IMR-90 (cell line): ENCODE measurements at regions of chr22 and their contacts with region 1.

Region 1: DNA sequence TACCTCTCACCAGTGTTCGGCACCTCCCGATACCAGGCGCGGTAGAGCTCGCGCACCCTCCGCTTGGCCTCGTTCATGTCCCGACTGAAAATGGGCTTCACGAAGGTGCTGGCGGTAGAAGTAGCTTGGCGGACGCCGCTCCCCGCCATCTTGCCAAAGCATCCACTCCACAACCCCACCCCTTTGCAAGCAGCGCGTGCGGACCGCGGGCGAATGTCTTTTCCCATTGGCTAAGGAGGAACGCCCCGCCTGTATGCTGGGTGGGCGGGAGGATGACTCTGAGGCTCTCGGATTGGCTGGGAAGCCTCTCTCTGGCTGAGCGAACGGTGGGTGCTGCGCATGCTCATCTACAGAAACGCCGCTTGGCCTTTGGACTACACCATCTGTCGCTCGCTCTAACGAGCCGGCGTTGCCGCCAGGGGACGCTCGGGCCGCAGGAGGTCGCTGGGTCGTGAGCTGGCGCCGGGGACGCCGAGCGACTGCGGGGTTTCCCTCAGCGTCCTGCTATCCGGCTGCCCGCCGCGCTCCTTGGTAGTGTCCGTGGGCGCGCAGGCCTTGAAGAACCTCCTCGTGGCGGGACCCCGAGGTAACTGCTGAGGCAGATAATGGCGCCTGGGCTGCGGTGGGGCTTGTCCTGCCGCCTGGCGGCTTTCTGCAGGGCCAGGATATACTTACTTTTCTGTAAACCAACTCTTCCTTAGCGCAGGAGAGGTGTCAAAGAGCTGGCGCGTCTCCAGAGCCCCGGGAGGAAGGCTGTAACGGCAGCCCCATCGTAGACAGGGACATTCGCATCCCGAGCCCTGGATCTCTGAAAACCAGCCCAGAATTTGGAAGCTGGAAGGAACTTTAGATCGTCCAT is at the start of gene NDUFA6:
- DNase-seq: peak; percentile 99
- ATAC-seq: peak; percentile 98
- H3K4me3 ChIP-seq: peak within 1 kb of the TSS; percentile 64
- H3K27ac ChIP-seq: peak within 1 kb of the TSS; percentile 82
- H3K4me1 ChIP-seq: peaks cover 2% of the 10 kb centered on the region; the same call in 1 of the 2 replicates
- H3K27me3 ChIP-seq: no peaks in the 10 kb centered on the region
- CTCF ChIP-seq: peak; percentile 94
- POLR2A ChIP-seq: peak; percentile 96
- RAD21 ChIP-seq: peak; percentile 82
- total RNA-seq, gene NDUFA6: 48.8 and 92.2 TPM in 2 replicates

Region 2: DNA sequence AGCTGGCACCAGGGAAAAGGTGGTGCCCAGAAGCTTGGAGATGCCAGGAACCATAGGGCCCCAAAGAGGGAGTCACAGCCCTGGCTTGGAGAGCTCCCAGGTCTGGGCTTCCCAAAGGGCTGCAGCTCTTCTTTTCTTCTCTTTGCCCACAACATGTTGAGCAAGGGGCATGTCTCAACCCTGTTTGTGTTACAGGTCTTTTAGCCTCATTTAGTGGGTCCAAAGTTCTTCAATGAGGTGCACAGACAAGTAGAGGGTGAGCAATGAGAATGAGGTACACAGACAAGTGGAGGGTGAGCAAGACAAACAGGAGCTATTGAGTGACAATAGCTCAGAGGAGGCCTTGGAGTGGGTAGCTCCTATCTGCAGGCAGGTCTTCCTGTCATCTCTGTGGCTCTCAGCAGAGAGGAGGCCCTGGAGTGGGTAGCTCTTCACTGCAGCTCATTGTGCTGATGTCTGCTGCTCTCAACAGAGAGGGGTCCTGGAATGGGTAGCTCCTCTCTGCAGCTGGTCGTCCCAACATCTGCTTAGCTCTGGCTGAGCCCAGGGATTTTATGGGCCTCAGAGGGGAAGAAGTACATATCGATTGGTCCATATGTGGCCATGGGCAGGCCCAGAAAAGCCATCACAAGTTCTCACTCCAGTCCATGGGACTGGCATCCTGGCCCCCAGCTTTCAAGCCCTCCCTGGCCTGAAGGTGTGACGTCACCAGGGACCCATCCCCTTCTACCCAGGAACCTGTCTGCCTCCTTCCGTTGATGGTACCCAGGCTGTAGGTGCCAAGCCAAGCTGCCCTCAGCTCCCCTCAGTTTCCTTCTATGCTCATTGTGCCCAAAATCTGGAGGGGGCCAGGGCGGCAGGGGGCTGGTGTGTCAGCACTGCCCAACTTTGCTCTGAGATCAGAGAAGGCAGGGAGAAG is 57.3 kb before region 1 on chr22:
- CTCF ChIA-PET with region 1: no interaction called
- POLR2A ChIA-PET with region 1: no interaction called
- dilution Hi-C with region 1: no loop called
- in situ Hi-C with region 1: no loop called
- intact Hi-C with region 1: no loop called
- DNase-seq: no peak
- ATAC-seq: no peak
- H3K4me3 ChIP-seq: no peak overlapping the region
- H3K27ac ChIP-seq: no peak overlapping the region
- H3K4me1 ChIP-seq: peaks cover 3% of the 10 kb centered on the region
- H3K27me3 ChIP-seq: no peaks in the 10 kb centered on the region
- CTCF ChIP-seq: no peak
- POLR2A ChIP-seq: no peak
- RAD21 ChIP-seq: no peak

Region 3: DNA sequence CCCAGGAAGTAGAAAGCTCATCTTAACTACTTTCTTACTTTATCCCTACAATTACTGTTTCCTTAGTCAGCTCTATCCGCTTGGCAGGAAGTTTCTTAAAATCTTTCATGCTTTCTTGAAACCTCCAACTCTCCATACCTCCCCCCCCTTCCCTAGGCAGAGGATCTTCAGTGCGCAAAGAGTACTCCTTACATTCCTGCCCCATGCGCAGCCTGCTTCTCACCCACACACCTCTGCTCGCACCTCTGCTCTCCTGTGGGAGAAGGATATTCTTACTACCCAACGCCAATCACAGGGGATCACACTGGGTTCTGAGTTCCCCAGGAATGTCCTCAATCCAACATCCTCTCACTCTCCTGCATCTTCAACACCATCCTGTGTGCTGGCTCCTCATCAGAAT is 167.3 kb after region 1 on chr22:
- CTCF ChIA-PET with region 1: no interaction called
- POLR2A ChIA-PET with region 1: no interaction called
- dilution Hi-C with region 1: no loop called
- in situ Hi-C with region 1: no loop called
- intact Hi-C with region 1: loop called (anchors 10 kb)
- DNase-seq: no peak
- ATAC-seq: no peak
- H3K4me3 ChIP-seq: no peak overlapping the region
- H3K27ac ChIP-seq: no peak overlapping the region
- H3K4me1 ChIP-seq: peaks cover 13% of the 10 kb centered on the region
- H3K27me3 ChIP-seq: no peaks in the 10 kb centered on the region
- CTCF ChIP-seq: no peak
- POLR2A ChIP-seq: no peak
- RAD21 ChIP-seq: no peak

Region 4: GRCh38 chr22:42313804-42314581 is 223.2 kb after region 1 on chr22:
- CTCF ChIA-PET with region 1: no interaction called
- POLR2A ChIA-PET with region 1: no interaction called
- dilution Hi-C with region 1: no loop called
- in situ Hi-C with region 1: no loop called
- intact Hi-C with region 1: loop called (anchors 5 kb)
- DNase-seq: peak; percentile 54
- ATAC-seq: peak; percentile 84
- H3K4me3 ChIP-seq: no peak overlapping the region
- H3K27ac ChIP-seq: no peak overlapping the region
- H3K4me1 ChIP-seq: no peaks in the 10 kb centered on the region
- H3K27me3 ChIP-seq: peaks cover 24% of the 10 kb centered on the region
- CTCF ChIP-seq: peak; percentile 46
- POLR2A ChIP-seq: no peak
- RAD21 ChIP-seq: peak; percentile 58

Region 5: DNA sequence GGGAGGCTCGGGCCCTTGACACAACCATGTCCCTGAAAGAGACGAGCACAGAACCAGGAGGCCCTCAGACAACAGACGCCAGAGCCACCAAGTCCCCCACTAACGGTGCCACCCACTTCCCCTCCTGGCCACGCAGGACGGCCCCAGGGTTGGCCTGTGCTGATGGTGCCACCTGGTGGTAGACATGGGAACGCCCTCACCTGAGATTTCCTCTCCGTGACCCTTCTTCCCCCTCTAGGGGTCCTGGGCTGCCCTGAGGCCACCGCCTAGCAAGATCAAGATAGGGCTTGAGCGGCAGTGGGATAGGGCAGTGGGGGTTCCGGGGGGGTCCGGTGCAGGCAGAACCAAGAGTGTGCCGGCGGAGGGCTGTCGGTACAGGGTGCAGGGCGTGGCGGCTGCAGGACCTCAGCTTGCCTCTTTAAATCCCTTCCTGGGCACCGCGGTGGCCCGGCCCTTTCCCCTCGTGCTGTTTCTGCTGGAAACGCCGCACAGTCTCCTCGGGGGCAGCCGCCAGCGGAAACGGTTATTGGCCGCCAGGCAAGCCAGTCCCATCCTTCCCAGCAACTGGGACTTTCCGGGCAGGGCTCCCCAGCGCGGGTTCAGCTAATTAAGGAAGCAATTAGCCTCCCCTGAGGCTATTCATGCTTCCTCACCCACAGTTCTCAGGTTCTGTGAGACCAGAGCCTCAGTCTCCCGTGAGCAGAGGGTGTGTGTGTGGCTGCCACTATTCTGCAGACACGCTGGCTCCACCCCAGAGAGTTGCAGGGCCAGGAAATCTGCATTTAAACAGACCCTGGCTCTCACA is 346.9 kb after region 1 on chr22:
- CTCF ChIA-PET with region 1: interaction called, 3 read pairs
- POLR2A ChIA-PET with region 1: no interaction called
- dilution Hi-C with region 1: no loop called
- in situ Hi-C with region 1: loop called (anchors 5 kb)
- intact Hi-C with region 1: loop called (anchors 2 kb)
- DNase-seq: peak; percentile 18
- ATAC-seq: peak; percentile 91
- H3K4me3 ChIP-seq: peak overlapping the region; percentile 42
- H3K27ac ChIP-seq: no peak overlapping the region
- H3K4me1 ChIP-seq: peaks cover 3% of the 10 kb centered on the region; the same call in 1 of the 2 replicates
- H3K27me3 ChIP-seq: peaks cover 26% of the 10 kb centered on the region
- CTCF ChIP-seq: peak; percentile 93
- POLR2A ChIP-seq: no peak
- RAD21 ChIP-seq: peak; percentile 96

Region 6: DNA sequence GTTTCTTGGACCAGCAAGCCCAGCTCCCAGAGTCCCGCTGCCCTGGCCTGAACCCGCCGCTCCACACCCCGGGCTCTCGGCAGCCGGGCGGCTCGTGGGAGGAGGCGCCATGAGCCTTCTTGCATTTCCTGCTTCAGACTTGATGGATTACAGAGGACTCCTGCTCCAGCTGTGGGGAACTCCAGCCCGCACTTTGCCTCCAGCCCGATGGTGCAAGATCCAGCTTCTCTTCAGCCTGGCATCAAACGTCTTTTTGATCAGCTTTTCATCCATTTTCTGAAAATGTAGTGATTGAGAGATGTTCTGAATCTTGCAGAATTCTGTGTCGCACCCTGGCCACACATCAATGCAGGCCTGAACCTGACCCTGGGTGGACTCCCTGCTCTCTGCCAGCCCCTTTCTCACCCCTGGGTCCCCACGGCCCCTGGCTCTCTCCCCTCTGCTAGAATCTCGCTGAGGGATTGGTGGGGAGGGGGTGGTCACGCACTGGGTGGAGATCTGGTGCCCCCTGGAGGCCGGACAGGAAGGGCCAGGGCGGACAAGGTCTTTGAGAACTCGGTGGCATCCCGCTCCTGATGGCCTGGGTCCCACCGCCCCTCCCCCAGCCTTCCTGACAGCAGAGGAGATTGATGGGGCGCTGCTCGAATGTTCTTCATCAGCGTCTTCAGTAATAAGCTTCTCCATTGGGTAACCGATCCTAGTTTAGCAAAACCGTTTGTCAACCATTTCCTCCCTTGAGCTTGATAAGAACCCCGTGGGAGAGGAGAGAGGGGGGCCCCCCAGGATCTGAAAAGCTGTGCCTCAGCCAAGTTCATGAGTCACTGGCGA is 353.5 kb after region 1 on chr22:
- CTCF ChIA-PET with region 1: interaction called, 8 read pairs
- POLR2A ChIA-PET with region 1: interaction called, 7 read pairs
- dilution Hi-C with region 1: no loop called
- in situ Hi-C with region 1: loop called (anchors 5 kb)
- intact Hi-C with region 1: loop called (anchors 1 kb)
- DNase-seq: peak; percentile 87
- ATAC-seq: peak; percentile 90
- H3K4me3 ChIP-seq: peak overlapping the region; percentile 27
- H3K27ac ChIP-seq: peak overlapping the region; percentile 24
- H3K4me1 ChIP-seq: peaks cover 12% of the 10 kb centered on the region; the same call in 1 of the 2 replicates
- H3K27me3 ChIP-seq: peaks cover 3% of the 10 kb centered on the region; the same call in 1 of the 2 replicates
- CTCF ChIP-seq: peak; percentile 71
- POLR2A ChIP-seq: no peak
- RAD21 ChIP-seq: peak; percentile 62

Region 7: GRCh38 chr22:42473484-42474193 is 382.8 kb after region 1 on chr22:
- CTCF ChIA-PET with region 1: no interaction called
- POLR2A ChIA-PET with region 1: no interaction called
- dilution Hi-C with region 1: no loop called
- in situ Hi-C with region 1: no loop called
- intact Hi-C with region 1: loop called (anchors 10 kb)
- DNase-seq: peak; percentile 63
- ATAC-seq: peak; percentile 82
- H3K4me3 ChIP-seq: no peak overlapping the region
- H3K27ac ChIP-seq: no peak overlapping the region
- H3K4me1 ChIP-seq: no peaks in the 10 kb centered on the region
- H3K27me3 ChIP-seq: peaks cover 22% of the 10 kb centered on the region
- CTCF ChIP-seq: peak; percentile 66
- POLR2A ChIP-seq: no peak
- RAD21 ChIP-seq: peak; percentile 59